ENCODE measurements at regions of chr12 and their contacts with region 1.

Region 1: GRCh38 chr12:53984901-53985709 is at the start of gene HOXC10:
- DNase-seq: peak; percentile 97
- H3K4me3 ChIP-seq: peak within 1 kb of the TSS; percentile 39 to 61
- H3K27ac ChIP-seq: no peak within 1 kb of the TSS
- H3K4me1 ChIP-seq: peaks cover 19% of the 10 kb centered on the region
- H3K27me3 ChIP-seq: no peaks in the 10 kb centered on the region
- CTCF ChIP-seq: peak; percentile 39 to 91 (median 80)
- POLR2A ChIP-seq: no peak
- total RNA-seq, gene HOXC10: 1.4 to 2.6 TPM

Region 2: GRCh38 chr12:53770281-53770680 is 214.8 kb before region 1 on chr12:
- intact Hi-C with region 1: loop called (anchors 10 kb)
- DNase-seq: no peak
- H3K4me3 ChIP-seq: no peak overlapping the region
- H3K27ac ChIP-seq: no peak overlapping the region
- H3K4me1 ChIP-seq: no peaks in the 10 kb centered on the region
- H3K27me3 ChIP-seq: no peaks in the 10 kb centered on the region
- CTCF ChIP-seq: no peak
- POLR2A ChIP-seq: no peak

Region 3: DNA sequence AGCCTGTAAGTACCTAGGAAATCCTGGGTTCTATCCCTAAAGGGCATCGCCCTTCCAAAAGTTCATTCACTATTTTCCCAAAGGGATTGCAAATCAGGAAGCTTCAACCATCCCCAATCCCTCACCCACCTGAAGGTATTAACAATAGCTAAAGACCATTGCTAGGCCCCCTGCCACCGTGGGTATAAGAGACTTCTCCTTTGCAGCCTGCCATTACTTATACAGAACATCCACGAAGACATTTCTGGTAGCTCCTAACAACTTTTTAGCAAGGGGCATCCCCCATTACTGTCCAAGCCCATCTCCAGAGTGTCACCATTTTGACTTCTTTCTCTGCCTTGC is 204.1 kb after region 1 on chr12:
- intact Hi-C with region 1: no loop called
- DNase-seq: no peak
- H3K4me3 ChIP-seq: peak overlapping the region; percentile 63 to 69
- H3K27ac ChIP-seq: no peak overlapping the region
- H3K4me1 ChIP-seq: peaks cover 16% of the 10 kb centered on the region
- H3K27me3 ChIP-seq: no peaks in the 10 kb centered on the region
- CTCF ChIP-seq: no peak
- POLR2A ChIP-seq: no peak

Region 4: DNA sequence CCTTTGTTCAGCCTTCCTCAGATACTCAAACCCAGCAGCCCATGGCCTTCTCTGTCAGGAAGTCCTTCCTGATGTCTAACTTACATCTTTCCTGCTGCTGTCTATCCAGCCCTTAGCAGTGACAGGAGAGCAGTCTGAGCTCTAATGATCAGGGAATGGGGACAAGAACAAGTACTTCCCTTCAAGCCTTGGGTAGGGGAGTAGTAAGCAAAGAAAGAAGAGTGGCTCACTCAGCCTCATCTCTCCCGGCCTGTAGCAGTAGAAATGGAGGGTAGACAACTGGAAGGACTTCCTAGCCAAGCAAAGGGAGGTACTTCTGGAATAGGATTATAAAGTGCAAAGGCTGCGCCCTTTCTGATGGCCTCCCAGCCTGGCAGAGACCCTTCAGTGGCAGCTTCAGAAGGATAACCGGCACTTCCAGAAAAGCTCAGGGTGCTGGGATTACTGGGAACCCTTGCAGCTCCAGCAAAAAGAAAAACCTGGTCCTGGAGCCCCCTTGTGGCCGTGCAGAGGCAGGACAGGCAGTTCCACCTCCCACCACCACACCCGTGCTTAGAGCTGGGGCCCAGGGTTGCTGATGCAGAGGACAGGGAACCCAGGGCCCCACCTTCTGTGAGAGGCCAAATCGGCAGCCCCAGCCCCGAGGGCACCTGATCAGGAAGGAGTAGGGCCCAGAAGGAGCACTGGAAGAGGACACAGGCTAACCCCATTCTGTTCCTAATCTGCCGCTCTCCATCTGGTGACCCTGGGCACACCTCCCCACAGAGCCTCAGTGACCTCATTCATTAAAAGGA is 216.1 kb after region 1 on chr12:
- intact Hi-C with region 1: loop called (anchors 5 kb)
- DNase-seq: peak; percentile 74
- H3K4me3 ChIP-seq: no peak overlapping the region
- H3K27ac ChIP-seq: no peak overlapping the region
- H3K4me1 ChIP-seq: no peaks in the 10 kb centered on the region
- H3K27me3 ChIP-seq: no peaks in the 10 kb centered on the region
- CTCF ChIP-seq: peak; percentile 93 to 98 (median 97)
- POLR2A ChIP-seq: no peak